CD4-positive, alpha-beta T cell (primary cell): ENCODE measurements at regions of chr2 and their contacts with region 1.

Region 1: DNA sequence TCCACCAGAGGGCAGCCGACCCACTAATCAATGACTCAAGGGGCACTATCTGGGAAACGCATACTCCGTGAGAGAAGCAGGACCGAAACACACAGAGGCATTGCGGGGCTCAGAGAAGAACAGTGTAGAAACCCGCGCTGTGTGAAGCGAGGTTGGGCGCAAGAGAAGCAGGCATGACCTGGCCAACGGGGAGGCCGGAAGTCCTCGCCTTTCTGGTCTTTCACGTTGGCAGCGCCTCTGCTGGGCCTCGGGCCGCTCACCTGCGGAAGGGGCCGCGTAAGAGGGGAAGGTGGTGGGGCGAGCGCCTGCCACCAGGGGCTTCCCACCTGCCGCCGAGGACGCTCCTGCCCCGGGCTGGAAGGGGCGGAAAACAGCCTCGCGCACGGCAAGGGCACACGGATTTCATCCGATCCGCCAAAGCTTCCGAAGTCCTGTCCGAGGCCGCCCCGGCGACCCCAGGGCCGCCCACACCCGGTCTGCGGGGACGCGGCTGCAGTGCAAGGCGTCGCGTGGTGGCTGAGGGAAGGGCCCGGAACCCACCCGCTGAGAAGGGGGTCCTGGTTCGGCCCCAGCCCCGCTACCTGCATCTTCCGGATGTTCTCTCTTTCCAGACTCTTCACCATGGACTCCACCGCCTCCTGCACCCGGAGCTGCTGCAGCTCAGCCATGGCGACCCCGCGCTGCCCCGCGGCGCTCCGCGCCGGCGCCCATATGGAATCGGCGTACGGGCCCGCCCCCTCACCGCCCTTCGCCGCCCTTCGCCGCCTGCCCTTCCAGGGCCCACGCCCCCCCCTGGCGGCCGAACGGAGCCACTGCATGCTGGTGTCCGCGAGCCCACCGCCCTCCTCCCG is at the start of gene FAM136A:
- DNase-seq: peak; percentile 78 to 95 (median 86)
- ATAC-seq: peak; percentile 89
- H3K4me3 ChIP-seq: peak within 1 kb of the TSS; percentile 68
- H3K4me3 Mint-ChIP-seq: peak within 1 kb of the TSS; percentile 92
- H3K27ac ChIP-seq: peak within 1 kb of the TSS; percentile 60 to 82
- H3K27ac Mint-ChIP-seq: peak within 1 kb of the TSS; percentile 83
- H3K4me1 ChIP-seq: peaks cover 25% of the 10 kb centered on the region
- H3K4me1 Mint-ChIP-seq: peaks cover 22% of the 10 kb centered on the region
- H3K27me3 ChIP-seq: no peaks in the 10 kb centered on the region
- H3K27me3 Mint-ChIP-seq: no peaks in the 10 kb centered on the region
- CTCF ChIP-seq: peak; percentile 81
- total RNA-seq, gene FAM136A: 30.6 to 31.4 TPM

Region 2: DNA sequence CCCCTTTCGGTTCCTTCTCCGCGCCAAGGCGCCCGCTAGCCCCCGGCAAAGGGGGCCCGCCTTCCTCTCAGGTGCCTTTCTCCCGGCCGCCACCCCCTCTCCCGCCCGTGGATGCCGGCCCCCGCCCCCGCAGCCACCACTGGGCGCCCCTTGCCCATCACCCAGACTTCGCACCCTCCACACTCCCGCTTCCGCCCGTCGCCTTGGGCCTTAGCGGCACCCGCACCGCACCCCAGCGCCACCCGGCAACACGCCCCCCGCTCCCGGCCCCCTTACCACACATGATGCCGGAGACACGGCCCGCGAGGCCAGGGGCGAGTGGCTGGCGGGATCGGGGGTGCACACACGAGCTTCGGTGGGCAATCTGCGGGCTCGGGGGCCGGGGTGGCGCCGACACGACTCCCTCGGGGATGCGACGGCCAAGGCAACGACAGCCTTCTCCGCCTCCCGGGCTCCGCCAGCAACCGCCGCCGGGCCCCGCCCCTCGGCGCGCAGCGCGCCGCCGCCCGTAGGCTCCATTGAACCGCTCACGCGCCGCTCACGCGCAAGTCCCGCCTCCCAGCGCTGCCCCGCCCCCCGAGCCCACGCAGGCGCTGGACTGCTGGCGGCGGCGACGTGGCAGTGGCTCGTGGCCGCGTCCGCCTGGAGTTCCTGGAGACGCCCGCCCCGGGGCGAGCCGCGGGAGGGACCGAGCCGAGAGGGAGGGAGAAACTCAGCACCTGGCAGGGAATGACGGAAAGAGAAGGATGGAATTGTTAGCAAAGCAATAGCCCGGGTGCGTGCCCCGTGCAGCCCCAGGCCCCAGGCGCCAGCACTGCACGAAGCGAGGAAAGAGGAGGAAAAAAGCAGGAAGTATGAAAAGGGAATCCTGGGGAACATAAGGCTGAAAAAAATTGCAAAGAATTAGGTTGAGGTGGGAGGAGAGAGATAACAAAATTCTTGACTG is 914.5 kb before region 1 on chr2 and contains the start of gene GFPT1:
- CTCF ChIA-PET with region 1: no interaction called
- POLR2A ChIA-PET with region 1: no interaction called
- intact Hi-C with region 1: loop called in 1 of 2 experiments (anchors 10 kb)
- DNase-seq: peak; percentile 84 to 97 (median 92)
- ATAC-seq: peak; percentile 97
- H3K4me3 ChIP-seq: peak within 1 kb of the TSS; percentile 62
- H3K4me3 Mint-ChIP-seq: peak within 1 kb of the TSS; percentile 89
- H3K27ac ChIP-seq: peak within 1 kb of the TSS; percentile 39 to 58
- H3K27ac Mint-ChIP-seq: peak within 1 kb of the TSS; percentile 79
- H3K4me1 ChIP-seq: peaks cover 22% of the 10 kb centered on the region
- H3K4me1 Mint-ChIP-seq: peaks cover 48% of the 10 kb centered on the region
- H3K27me3 ChIP-seq: no peaks in the 10 kb centered on the region
- H3K27me3 Mint-ChIP-seq: no peaks in the 10 kb centered on the region
- CTCF ChIP-seq: no peak
- total RNA-seq, gene GFPT1: 17.6 to 18.3 TPM

Region 3: GRCh38 chr2:70214953-70215549 is 86.5 kb before region 1 on chr2:
- CTCF ChIA-PET with region 1: no interaction called
- POLR2A ChIA-PET with region 1: no interaction called
- intact Hi-C with region 1: no loop called
- DNase-seq: no peak
- ATAC-seq: no peak
- H3K4me3 ChIP-seq: no peak overlapping the region
- H3K4me3 Mint-ChIP-seq: no peak overlapping the region
- H3K27ac ChIP-seq: no peak overlapping the region
- H3K27ac Mint-ChIP-seq: no peak overlapping the region
- H3K4me1 ChIP-seq: no peaks in the 10 kb centered on the region
- H3K4me1 Mint-ChIP-seq: peaks cover 10% of the 10 kb centered on the region
- H3K27me3 ChIP-seq: no peaks in the 10 kb centered on the region
- H3K27me3 Mint-ChIP-seq: no peaks in the 10 kb centered on the region
- CTCF ChIP-seq: no peak

Region 4: GRCh38 chr2:70258532-70258874 is 43.1 kb before region 1 on chr2:
- CTCF ChIA-PET with region 1: interaction called, 4 read pairs
- POLR2A ChIA-PET with region 1: interaction called, 14 read pairs
- intact Hi-C with region 1: no loop called
- DNase-seq: peak in 3 of 14 experiments; percentile 2 to 37 (median 11)
- ATAC-seq: no peak
- H3K4me3 ChIP-seq: peak overlapping the region; percentile 73
- H3K4me3 Mint-ChIP-seq: peak overlapping the region; percentile 95
- H3K27ac ChIP-seq: peak overlapping the region in 1 of 2 donors; percentile 45
- H3K27ac Mint-ChIP-seq: peak overlapping the region; percentile 86
- H3K4me1 ChIP-seq: peaks cover 20% of the 10 kb centered on the region
- H3K4me1 Mint-ChIP-seq: peaks cover 42% of the 10 kb centered on the region
- H3K27me3 ChIP-seq: no peaks in the 10 kb centered on the region
- H3K27me3 Mint-ChIP-seq: no peaks in the 10 kb centered on the region
- CTCF ChIP-seq: no peak

Region 5: GRCh38 chr2:70789304-70790135 is 488.0 kb after region 1 on chr2:
- CTCF ChIA-PET with region 1: no interaction called
- POLR2A ChIA-PET with region 1: no interaction called
- intact Hi-C with region 1: loop called in 1 of 2 experiments (anchors 5 kb)
- DNase-seq: peak; percentile 36 to 79 (median 56)
- ATAC-seq: peak; percentile 73
- H3K4me3 ChIP-seq: peak overlapping the region; percentile 38
- H3K4me3 Mint-ChIP-seq: peak overlapping the region; percentile 81
- H3K27ac ChIP-seq: no peak overlapping the region
- H3K27ac Mint-ChIP-seq: no peak overlapping the region
- H3K4me1 ChIP-seq: peaks cover 11% of the 10 kb centered on the region
- H3K4me1 Mint-ChIP-seq: peaks cover 13% of the 10 kb centered on the region
- H3K27me3 ChIP-seq: peaks cover 31 to 53% of the 10 kb centered on the region in 2 experiments
- H3K27me3 Mint-ChIP-seq: peaks cover 71% of the 10 kb centered on the region
- CTCF ChIP-seq: peak; percentile 66

Region 6: DNA sequence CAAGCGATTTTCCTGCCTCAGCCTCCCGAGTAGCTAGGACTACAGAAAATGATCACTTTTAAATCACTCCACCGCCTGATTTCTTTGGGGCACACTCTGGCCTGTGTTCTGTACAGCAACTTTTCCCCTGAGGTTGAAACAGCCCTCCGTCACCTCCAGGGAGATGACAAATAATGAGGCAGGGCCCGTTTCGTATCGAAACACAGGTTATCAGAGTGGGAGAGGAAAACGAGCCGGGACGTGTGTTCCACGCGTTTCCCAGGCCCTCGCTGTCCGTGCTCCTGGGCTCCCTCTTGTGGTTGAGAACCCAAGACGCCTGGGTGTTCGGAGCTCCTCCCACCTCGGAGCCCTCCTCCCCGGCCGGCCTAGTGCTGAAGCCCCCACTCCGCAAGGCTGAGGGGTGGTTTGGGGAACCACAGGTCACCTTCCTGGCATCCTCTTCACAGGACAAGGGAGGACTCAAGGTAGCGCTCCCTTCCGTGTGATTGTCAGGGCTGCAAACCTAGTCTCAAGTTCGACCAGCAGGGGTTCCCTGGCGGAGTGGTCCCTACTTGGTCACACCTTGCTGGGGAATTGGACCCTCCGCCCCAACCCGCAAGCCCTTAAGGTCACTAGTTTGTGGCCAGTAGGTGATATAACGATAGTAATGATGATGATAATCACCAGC is 646.9 kb after region 1 on chr2:
- CTCF ChIA-PET with region 1: interaction called, 5 read pairs
- POLR2A ChIA-PET with region 1: no interaction called
- intact Hi-C with region 1: loop called (anchors 2 kb)
- DNase-seq: peak; percentile 62 to 87 (median 70)
- ATAC-seq: peak; percentile 95
- H3K4me3 ChIP-seq: peak overlapping the region; percentile 3
- H3K4me3 Mint-ChIP-seq: peak overlapping the region; percentile 79
- H3K27ac ChIP-seq: no peak overlapping the region
- H3K27ac Mint-ChIP-seq: no peak overlapping the region
- H3K4me1 ChIP-seq: peaks cover 13% of the 10 kb centered on the region
- H3K4me1 Mint-ChIP-seq: peaks cover 12% of the 10 kb centered on the region
- H3K27me3 ChIP-seq: peaks cover 2 to 3% of the 10 kb centered on the region in 2 experiments
- H3K27me3 Mint-ChIP-seq: peaks cover 22% of the 10 kb centered on the region
- CTCF ChIP-seq: peak; percentile 95

Region 7: GRCh38 chr2:71130113-71130904 is 828.7 kb after region 1 on chr2 and contains the starts of genes MCEE and MPHOSPH10:
- CTCF ChIA-PET with region 1: no interaction called
- POLR2A ChIA-PET with region 1: no interaction called
- intact Hi-C with region 1: loop called in 1 of 2 experiments (anchors 10 kb)
- DNase-seq: peak; percentile 82 to 94 (median 88)
- ATAC-seq: peak; percentile 89
- H3K4me3 ChIP-seq: peak within 1 kb of the TSS; percentile 95
- H3K4me3 Mint-ChIP-seq: no peak within 1 kb of the TSS
- H3K27ac ChIP-seq: peak within 1 kb of the TSS; percentile 77 to 89
- H3K27ac Mint-ChIP-seq: no peak within 1 kb of the TSS
- H3K4me1 ChIP-seq: peaks cover 24% of the 10 kb centered on the region
- H3K4me1 Mint-ChIP-seq: peaks cover 36% of the 10 kb centered on the region
- H3K27me3 ChIP-seq: no peaks in the 10 kb centered on the region
- H3K27me3 Mint-ChIP-seq: no peaks in the 10 kb centered on the region
- CTCF ChIP-seq: no peak
- total RNA-seq, gene MCEE: 4.3 to 8.0 TPM
- total RNA-seq, gene MPHOSPH10: 36.7 to 38.2 TPM